Activated B cell treated with CpG ODN at 0.5 μM for 24 hours (primary cell): ENCODE measurements at regions of chr1 and their contacts with region 1.

Region 1: GRCh38 chr1:26723013-26723991 is 27.5 kb downstream of the ARID1A start:
- DNase-seq: peak; percentile 20
- ATAC-seq: peak; percentile 49
- H3K4me3 Mint-ChIP-seq: peak overlapping the region; percentile 56
- H3K27ac Mint-ChIP-seq: peak overlapping the region; percentile 64
- H3K4me1 Mint-ChIP-seq: peaks cover 90% of the 10 kb centered on the region
- H3K27me3 Mint-ChIP-seq: no peaks in the 10 kb centered on the region
- CTCF ChIP-seq: no peak

Region 2: DNA sequence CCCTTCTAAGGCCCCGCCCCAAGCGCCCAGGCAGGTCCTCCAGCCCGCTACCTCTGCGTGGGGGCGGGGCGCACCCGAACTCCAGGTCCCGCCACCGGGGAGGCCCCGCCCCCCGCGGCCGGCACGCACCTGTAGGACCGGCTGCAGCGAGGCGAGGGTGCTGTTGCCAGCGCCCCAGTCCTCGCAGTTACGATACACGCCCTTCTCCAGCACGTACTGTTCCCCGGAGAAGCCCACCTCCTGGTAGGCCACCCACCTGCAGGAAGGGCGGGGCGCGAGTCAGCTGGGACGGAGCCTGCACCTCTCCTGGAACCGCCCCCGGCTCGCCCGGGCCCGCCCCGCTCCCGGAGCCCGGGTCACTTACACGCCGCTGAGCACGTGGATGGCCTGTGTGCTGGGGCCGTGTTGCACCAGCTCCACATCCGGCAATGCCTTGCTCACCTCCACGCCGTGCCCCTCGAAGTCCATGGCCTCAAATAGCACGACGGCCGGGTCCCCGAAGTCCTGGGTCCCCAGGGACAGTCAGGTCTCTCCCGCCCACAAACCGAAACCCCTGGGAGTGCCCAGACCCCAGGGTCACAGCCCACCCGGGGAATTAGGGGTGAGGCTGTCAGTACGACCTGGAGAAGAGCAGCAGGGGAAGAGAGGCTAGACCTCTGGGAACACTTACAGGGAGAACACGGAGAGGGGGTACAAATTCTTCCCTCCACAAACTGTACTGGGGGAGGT is 386.7 kb before region 1 on chr1:
- CTCF ChIA-PET with region 1: no interaction called
- POLR2A ChIA-PET with region 1: no interaction called
- intact Hi-C with region 1: no loop called
- DNase-seq: peak; percentile 83
- ATAC-seq: peak; percentile 96
- H3K4me3 Mint-ChIP-seq: peak overlapping the region; percentile 91
- H3K27ac Mint-ChIP-seq: peak overlapping the region; percentile 7
- H3K4me1 Mint-ChIP-seq: peaks cover 12% of the 10 kb centered on the region
- H3K27me3 Mint-ChIP-seq: no peaks in the 10 kb centered on the region
- CTCF ChIP-seq: no peak

Region 3: GRCh38 chr1:26705788-26706311 is 17.5 kb before region 1 on chr1:
- CTCF ChIA-PET with region 1: interaction called, 3 read pairs
- POLR2A ChIA-PET with region 1: interaction called, 8 read pairs
- intact Hi-C with region 1: loop called (anchors 2 kb)
- DNase-seq: no peak
- ATAC-seq: no peak
- H3K4me3 Mint-ChIP-seq: peak overlapping the region; percentile 50
- H3K27ac Mint-ChIP-seq: peak overlapping the region; percentile 79
- H3K4me1 Mint-ChIP-seq: peaks cover 43% of the 10 kb centered on the region
- H3K27me3 Mint-ChIP-seq: no peaks in the 10 kb centered on the region
- CTCF ChIP-seq: no peak

Region 4: GRCh38 chr1:26744075-26744959 is 21.0 kb after region 1 on chr1:
- CTCF ChIA-PET with region 1: interaction called, 4 read pairs
- POLR2A ChIA-PET with region 1: interaction called, 10 read pairs
- intact Hi-C with region 1: loop called (anchors 2 kb)
- DNase-seq: peak; percentile 57
- ATAC-seq: peak; percentile 96
- H3K4me3 Mint-ChIP-seq: peak overlapping the region; percentile 79
- H3K27ac Mint-ChIP-seq: peak overlapping the region; percentile 97
- H3K4me1 Mint-ChIP-seq: peaks cover 91% of the 10 kb centered on the region
- H3K27me3 Mint-ChIP-seq: no peaks in the 10 kb centered on the region
- CTCF ChIP-seq: no peak

Region 5: GRCh38 chr1:26949926-26950319 is 226.6 kb after region 1 on chr1:
- CTCF ChIA-PET with region 1: no interaction called
- POLR2A ChIA-PET with region 1: no interaction called
- intact Hi-C with region 1: no loop called
- DNase-seq: no peak
- ATAC-seq: no peak
- H3K4me3 Mint-ChIP-seq: no peak overlapping the region
- H3K27ac Mint-ChIP-seq: no peak overlapping the region
- H3K4me1 Mint-ChIP-seq: no peaks in the 10 kb centered on the region
- H3K27me3 Mint-ChIP-seq: peaks cover 2% of the 10 kb centered on the region
- CTCF ChIP-seq: no peak